ENCODE measurements at regions of chr2 and their contacts with region 1.

Region 1: GRCh38 chr2:210195101-210195852 is 24.1 kb upstream of the KANSL1L start:
- DNase-seq: peak; percentile 65
- H3K4me3 ChIP-seq: peak overlapping the region; percentile 13 to 76 (median 45)
- H3K27ac ChIP-seq: no peak overlapping the region
- H3K4me1 ChIP-seq: peaks cover 14% of the 10 kb centered on the region
- H3K27me3 ChIP-seq: peaks cover 0 to 3% of the 10 kb centered on the region in 2 experiments
- CTCF ChIP-seq: peak; percentile 31 to 45
- POLR2A ChIP-seq: no peak

Region 2: GRCh38 chr2:209556354-209556961 is 638.8 kb before region 1 on chr2:
- CTCF ChIA-PET with region 1: interaction called, 10 read pairs
- POLR2A ChIA-PET with region 1: no interaction called
- dilution Hi-C with region 1: no loop called
- intact Hi-C with region 1: no loop called
- DNase-seq: peak; percentile 70
- H3K4me3 ChIP-seq: no peak overlapping the region
- H3K27ac ChIP-seq: no peak overlapping the region
- H3K4me1 ChIP-seq: no peaks in the 10 kb centered on the region
- H3K27me3 ChIP-seq: no peaks in the 10 kb centered on the region
- CTCF ChIP-seq: peak; percentile 48 to 57
- POLR2A ChIP-seq: no peak

Region 3: GRCh38 chr2:209933499-209934483 is 261.5 kb before region 1 on chr2:
- CTCF ChIA-PET with region 1: interaction called, 15 read pairs
- POLR2A ChIA-PET with region 1: interaction called, 4 read pairs
- dilution Hi-C with region 1: no loop called
- intact Hi-C with region 1: no loop called
- DNase-seq: peak; percentile 73
- H3K4me3 ChIP-seq: no peak overlapping the region
- H3K27ac ChIP-seq: no peak overlapping the region
- H3K4me1 ChIP-seq: no peaks in the 10 kb centered on the region
- H3K27me3 ChIP-seq: no peaks in the 10 kb centered on the region
- CTCF ChIP-seq: no peak
- POLR2A ChIP-seq: no peak

Region 4: DNA sequence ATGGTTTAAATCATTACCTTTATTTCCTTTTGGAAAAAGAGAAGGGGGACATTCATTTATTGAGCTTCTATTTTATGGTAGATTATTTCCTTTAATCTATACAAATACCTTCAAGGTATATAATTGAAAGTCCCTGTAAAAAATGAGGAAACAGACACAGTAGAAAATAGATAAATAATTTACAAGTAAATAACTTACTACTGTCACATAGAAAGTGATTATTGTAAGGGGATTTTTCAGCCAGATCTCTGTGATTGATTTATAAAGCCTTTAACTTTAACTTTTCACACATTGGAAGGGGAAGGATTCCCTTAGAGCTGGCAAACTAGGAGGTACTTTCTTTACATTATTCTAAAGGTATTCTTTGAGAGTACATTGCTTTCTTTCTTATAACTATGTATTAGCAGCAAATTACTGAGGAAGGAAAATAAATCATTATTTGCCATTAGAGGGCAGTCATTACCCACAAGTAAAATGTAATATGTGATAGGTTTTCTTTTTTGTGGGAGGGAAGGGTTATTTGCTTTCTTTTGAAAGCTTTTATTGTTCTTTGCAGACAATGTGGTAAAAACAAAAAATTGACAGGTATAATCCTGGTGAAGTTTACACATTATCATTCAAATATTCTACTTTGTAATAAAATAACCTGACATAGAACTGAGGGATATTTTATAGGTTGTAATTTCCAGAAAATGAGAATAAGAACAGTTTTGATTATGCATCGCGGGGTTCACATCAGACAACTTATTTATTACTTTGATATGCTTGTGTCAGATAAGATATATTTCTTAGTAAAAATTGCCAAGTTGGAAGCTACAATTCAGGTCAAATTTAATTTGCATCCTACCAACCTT is 217.7 kb before region 1 on chr2:
- CTCF ChIA-PET with region 1: interaction called, 169 read pairs
- POLR2A ChIA-PET with region 1: no interaction called
- dilution Hi-C with region 1: no loop called
- intact Hi-C with region 1: loop called (anchors 1 kb)
- DNase-seq: peak; percentile 60
- H3K4me3 ChIP-seq: no peak overlapping the region
- H3K27ac ChIP-seq: no peak overlapping the region
- H3K4me1 ChIP-seq: no peaks in the 10 kb centered on the region
- H3K27me3 ChIP-seq: peaks cover 2 to 6% of the 10 kb centered on the region in 2 experiments
- CTCF ChIP-seq: peak in 1 of 2 donors; percentile 9
- POLR2A ChIP-seq: no peak

Region 5: GRCh38 chr2:210072922-210073509 is 122.3 kb before region 1 on chr2:
- CTCF ChIA-PET with region 1: interaction called, 30 read pairs
- POLR2A ChIA-PET with region 1: no interaction called
- dilution Hi-C with region 1: no loop called
- intact Hi-C with region 1: loop called (anchors 1 kb)
- DNase-seq: peak; percentile 78
- H3K4me3 ChIP-seq: peak overlapping the region in 1 of 3 experiments; percentile 17
- H3K27ac ChIP-seq: no peak overlapping the region
- H3K4me1 ChIP-seq: no peaks in the 10 kb centered on the region
- H3K27me3 ChIP-seq: no peaks in the 10 kb centered on the region
- CTCF ChIP-seq: peak; percentile 49 to 52
- POLR2A ChIP-seq: no peak

Measured in endothelial cell of umbilical vein (primary cell).